ENCODE measurements at regions of chr6 and their contacts with region 1.

Region 1: GRCh38 chr6:110179401-110180227 is at the start of gene WASF1:
- DNase-seq: peak; percentile 76
- ATAC-seq: peak; percentile 92
- H3K4me3 ChIP-seq: peak within 1 kb of the TSS; percentile 83
- H3K27ac ChIP-seq: peak within 1 kb of the TSS; percentile 77
- H3K4me1 ChIP-seq: no peaks in the 10 kb centered on the region; the same call in 1 of the 2 replicates
- H3K27me3 ChIP-seq: no peaks in the 10 kb centered on the region
- CTCF ChIP-seq: no peak
- EP300 ChIP-seq: 0 out of 4 replicates have a peak, but pooled peaks of 1 of the 2 experiments have one; percentile 1
- POLR2A ChIP-seq: no peak
- RAD21 ChIP-seq: no peak
- polyA plus RNA-seq, gene WASF1: 1.7 to 3.5 TPM

Region 2: GRCh38 chr6:109472132-109472995 is 707.2 kb before region 1 on chr6:
- CTCF ChIA-PET with region 1: no interaction called
- POLR2A ChIA-PET with region 1: no interaction called
- RAD21 ChIA-PET with region 1: no interaction called
- SMC1A ChIA-PET with region 1: no interaction called
- in situ Hi-C with region 1: no loop called
- intact Hi-C with region 1: loop called (anchors 10 kb)
- DNase-seq: no peak
- ATAC-seq: peak; percentile 81
- H3K4me3 ChIP-seq: peak overlapping the region; percentile 39; the same call in 1 of the 2 replicates
- H3K27ac ChIP-seq: peak overlapping the region; percentile 62
- H3K4me1 ChIP-seq: peaks cover 28% of the 10 kb centered on the region
- H3K27me3 ChIP-seq: no peaks in the 10 kb centered on the region
- CTCF ChIP-seq: peak; percentile 17 to 25 (median 19); a peak in 4 of 6 replicates
- EP300 ChIP-seq: no peak; a peak in 1 of 4 replicates
- POLR2A ChIP-seq: no peak
- RAD21 ChIP-seq: no peak

Region 3: DNA sequence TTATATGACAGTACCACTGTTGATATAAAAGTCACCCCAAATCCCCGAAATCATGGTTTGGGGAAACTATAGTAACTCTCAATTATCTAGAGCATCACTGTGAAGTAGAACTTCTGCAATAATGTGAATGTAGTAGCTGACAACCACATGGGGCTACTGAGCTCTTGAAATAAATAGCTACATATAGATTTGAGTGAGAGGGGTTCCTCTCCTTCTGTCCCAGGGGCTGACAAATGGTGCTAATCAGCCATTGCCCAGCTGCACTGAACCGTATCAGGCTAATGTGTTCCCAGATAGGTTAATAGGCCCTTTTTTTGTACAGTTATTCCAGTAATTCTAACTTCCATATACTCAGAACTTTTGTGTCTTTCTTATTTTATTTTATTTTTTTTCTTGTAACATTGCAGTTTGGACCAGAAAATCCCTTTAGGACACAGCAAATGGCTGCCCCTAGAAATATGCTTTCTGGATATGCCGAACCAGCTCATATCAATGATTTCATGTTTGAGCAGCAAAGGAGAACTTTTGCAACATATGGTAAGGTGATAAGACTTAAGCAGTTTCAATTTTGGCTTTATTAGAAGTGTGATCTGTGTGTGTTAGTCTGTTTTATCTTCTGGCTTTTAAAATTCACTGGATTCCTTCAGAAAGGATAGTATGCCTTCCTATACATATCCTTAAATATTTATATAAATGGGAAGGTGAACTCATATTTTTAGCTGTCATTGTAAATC is 21.7 kb after region 1 on chr6:
- CTCF ChIA-PET with region 1: interaction called, 9 read pairs
- POLR2A ChIA-PET with region 1: interaction called, 6 read pairs
- RAD21 ChIA-PET with region 1: interaction called, 12 read pairs
- SMC1A ChIA-PET with region 1: interaction called, 13 read pairs
- in situ Hi-C with region 1: no loop called
- intact Hi-C with region 1: no loop called
- DNase-seq: no peak
- ATAC-seq: no peak
- H3K4me3 ChIP-seq: no peak overlapping the region
- H3K27ac ChIP-seq: no peak overlapping the region
- H3K4me1 ChIP-seq: peaks cover 9% of the 10 kb centered on the region
- H3K27me3 ChIP-seq: no peaks in the 10 kb centered on the region
- CTCF ChIP-seq: no peak
- EP300 ChIP-seq: no peak
- POLR2A ChIP-seq: no peak
- RAD21 ChIP-seq: no peak

Region 4: DNA sequence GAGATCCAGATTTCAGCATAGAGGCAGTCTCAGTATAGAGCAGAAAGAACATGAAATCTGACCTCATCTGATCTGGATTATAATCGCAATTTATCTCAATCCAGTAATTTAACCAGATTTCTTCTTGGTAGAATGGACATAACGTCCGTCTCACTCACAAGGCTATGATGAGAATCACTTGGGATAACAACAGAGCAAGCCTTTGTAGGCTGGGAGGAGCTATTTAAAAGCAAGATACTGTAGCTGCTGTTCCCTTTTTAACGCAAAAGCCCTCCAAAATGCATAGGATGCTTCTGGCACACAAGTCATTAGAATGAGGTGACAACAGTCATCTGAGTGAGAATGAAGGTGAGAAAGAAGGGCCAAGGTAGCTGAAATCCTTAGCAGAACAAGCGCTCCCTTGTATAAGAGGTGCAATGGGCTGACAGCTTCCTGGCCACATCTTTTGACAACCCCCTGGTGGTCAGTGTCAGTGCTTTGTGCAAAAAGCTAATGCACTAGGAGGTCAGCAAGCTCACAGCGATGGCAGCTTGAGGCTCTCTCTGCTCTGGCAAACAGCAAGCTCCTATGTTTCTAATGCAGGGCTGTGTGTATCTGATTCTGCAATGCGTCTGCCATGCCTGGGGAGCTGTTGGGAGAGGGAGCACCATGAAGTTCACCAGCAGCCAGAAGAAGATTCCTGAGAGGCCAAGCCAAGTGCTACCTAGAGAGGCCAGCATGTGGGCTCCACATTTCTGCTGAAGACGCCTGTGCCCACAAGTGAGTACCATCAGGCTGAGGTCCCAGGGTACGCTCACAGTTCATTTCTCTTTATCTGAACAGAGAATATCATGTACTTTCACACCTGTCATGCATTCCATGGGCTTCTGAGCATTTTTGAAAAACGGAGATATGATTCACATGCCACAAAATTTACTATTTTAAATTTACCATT is 162.3 kb after region 1 on chr6:
- CTCF ChIA-PET with region 1: interaction called, 4 read pairs
- POLR2A ChIA-PET with region 1: no interaction called
- RAD21 ChIA-PET with region 1: interaction called, 10 read pairs
- SMC1A ChIA-PET with region 1: interaction called, 4 read pairs
- in situ Hi-C with region 1: no loop called
- intact Hi-C with region 1: no loop called
- DNase-seq: no peak
- ATAC-seq: peak; percentile 52; the same call in 2 of the 3 replicates
- H3K4me3 ChIP-seq: no peak overlapping the region
- H3K27ac ChIP-seq: no peak overlapping the region
- H3K4me1 ChIP-seq: no peaks in the 10 kb centered on the region
- H3K27me3 ChIP-seq: no peaks in the 10 kb centered on the region
- CTCF ChIP-seq: peak in 1 of 3 experiments; percentile 22; a peak in 1 of 6 replicates
- EP300 ChIP-seq: no peak
- POLR2A ChIP-seq: no peak
- RAD21 ChIP-seq: peak; percentile 29; the same call in 1 of the 2 replicates

Region 5: DNA sequence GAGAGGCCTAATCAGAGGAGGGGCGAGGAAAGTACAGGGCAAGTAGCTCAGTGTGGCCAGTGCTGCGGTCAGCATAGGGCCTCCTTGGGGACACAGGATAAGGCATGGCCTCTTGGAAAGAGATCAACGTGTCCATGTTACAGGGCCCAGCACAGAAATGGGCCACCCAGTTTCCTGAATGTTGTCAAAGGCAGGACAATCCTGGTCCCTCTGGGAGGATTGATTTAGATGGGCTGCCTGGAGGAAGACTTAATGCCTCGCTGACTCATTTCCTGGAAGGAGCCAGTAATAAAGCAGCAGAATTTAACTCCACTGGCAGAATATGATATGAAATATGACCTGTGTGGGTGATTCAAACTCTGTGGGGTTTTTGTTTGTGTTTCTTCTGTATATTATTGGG is 219.2 kb after region 1 on chr6:
- CTCF ChIA-PET with region 1: interaction called, 74 read pairs
- POLR2A ChIA-PET with region 1: no interaction called
- RAD21 ChIA-PET with region 1: no interaction called
- SMC1A ChIA-PET with region 1: no interaction called
- in situ Hi-C with region 1: loop called (anchors 10 kb)
- intact Hi-C with region 1: no loop called
- DNase-seq: no peak
- ATAC-seq: no peak
- H3K4me3 ChIP-seq: no peak overlapping the region
- H3K27ac ChIP-seq: no peak overlapping the region
- H3K4me1 ChIP-seq: no peaks in the 10 kb centered on the region
- H3K27me3 ChIP-seq: peaks cover 0 to 4% of the 10 kb centered on the region in 2 experiments; a peak in 2 of 4 replicates
- CTCF ChIP-seq: no peak
- EP300 ChIP-seq: no peak
- POLR2A ChIP-seq: no peak
- RAD21 ChIP-seq: no peak

Measured in GM12878 (cell line).